CD8-positive, alpha-beta T cell (primary cell): ENCODE measurements at regions of chr1 and their contacts with region 1.

Region 1: DNA sequence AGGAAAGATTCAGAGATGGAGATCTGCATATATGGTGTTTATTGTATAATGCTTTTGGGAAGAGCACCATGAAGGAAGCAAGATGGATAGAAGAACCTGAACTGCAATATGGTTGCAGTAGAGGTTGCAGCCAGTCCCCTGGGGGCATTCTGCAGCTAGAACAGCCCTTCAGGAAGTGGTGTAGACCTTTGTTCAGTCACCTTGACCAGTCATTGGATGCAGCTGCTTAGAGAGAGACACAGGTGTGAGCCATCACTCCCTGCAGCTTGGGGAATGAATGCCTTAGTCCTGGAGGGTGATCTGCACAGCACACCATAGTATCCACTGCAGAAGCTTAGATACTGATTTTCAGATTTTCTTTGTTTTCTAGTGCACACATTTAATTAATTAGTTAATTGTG is 42.3 kb downstream of the NEK7 start:
- DNase-seq: no peak
- ATAC-seq: no peak
- H3K4me3 ChIP-seq: no peak overlapping the region
- H3K4me3 Mint-ChIP-seq: no peak overlapping the region
- H3K27ac ChIP-seq: no peak overlapping the region
- H3K27ac Mint-ChIP-seq: peak overlapping the region; percentile 1
- H3K4me1 ChIP-seq: peaks cover 34% of the 10 kb centered on the region
- H3K4me1 Mint-ChIP-seq: peaks cover 83% of the 10 kb centered on the region
- H3K27me3 ChIP-seq: no peaks in the 10 kb centered on the region
- H3K27me3 Mint-ChIP-seq: no peaks in the 10 kb centered on the region
- CTCF ChIP-seq: no peak

Region 2: GRCh38 chr1:198187973-198188588 is 11.0 kb before region 1 on chr1:
- CTCF ChIA-PET with region 1: interaction called, 4 read pairs
- POLR2A ChIA-PET with region 1: interaction called, 3 read pairs
- intact Hi-C with region 1: loop called in 1 of 2 experiments (anchors 2 kb)
- DNase-seq: peak in 6 of 9 experiments; percentile 27 to 79 (median 45)
- ATAC-seq: peak; percentile 87
- H3K4me3 ChIP-seq: no peak overlapping the region
- H3K4me3 Mint-ChIP-seq: peak overlapping the region; percentile 23
- H3K27ac ChIP-seq: peak overlapping the region in 1 of 2 experiments; percentile 78
- H3K27ac Mint-ChIP-seq: peak overlapping the region; percentile 81
- H3K4me1 ChIP-seq: peaks cover 64% of the 10 kb centered on the region
- H3K4me1 Mint-ChIP-seq: peaks cover 83% of the 10 kb centered on the region
- H3K27me3 ChIP-seq: no peaks in the 10 kb centered on the region
- H3K27me3 Mint-ChIP-seq: no peaks in the 10 kb centered on the region
- CTCF ChIP-seq: no peak

Region 3: DNA sequence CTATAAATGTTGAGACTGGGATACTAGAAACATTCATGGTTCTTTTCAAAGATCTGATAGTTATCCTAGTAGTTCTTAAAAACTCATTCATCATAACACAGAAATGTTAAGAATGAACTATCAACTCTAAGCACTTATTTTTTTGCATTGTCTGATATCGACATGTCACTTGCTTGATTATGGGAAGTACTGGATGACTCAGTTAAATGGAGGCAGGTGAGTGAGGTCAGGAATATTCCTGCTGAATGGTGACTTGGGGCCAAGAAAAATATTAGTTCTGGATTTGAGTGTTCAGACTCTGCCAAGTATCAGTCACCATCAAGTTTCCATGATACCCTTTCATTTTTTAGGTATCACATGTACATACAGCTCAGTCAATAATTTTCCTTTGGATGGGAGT is 21.3 kb after region 1 on chr1:
- CTCF ChIA-PET with region 1: no interaction called
- POLR2A ChIA-PET with region 1: interaction called, 4 read pairs
- intact Hi-C with region 1: loop called (anchors 2 kb)
- DNase-seq: no peak
- ATAC-seq: no peak
- H3K4me3 ChIP-seq: no peak overlapping the region
- H3K4me3 Mint-ChIP-seq: no peak overlapping the region
- H3K27ac ChIP-seq: no peak overlapping the region
- H3K27ac Mint-ChIP-seq: peak overlapping the region; percentile 62
- H3K4me1 ChIP-seq: no peaks in the 10 kb centered on the region
- H3K4me1 Mint-ChIP-seq: peaks cover 55% of the 10 kb centered on the region
- H3K27me3 ChIP-seq: no peaks in the 10 kb centered on the region
- H3K27me3 Mint-ChIP-seq: no peaks in the 10 kb centered on the region
- CTCF ChIP-seq: no peak

Region 4: DNA sequence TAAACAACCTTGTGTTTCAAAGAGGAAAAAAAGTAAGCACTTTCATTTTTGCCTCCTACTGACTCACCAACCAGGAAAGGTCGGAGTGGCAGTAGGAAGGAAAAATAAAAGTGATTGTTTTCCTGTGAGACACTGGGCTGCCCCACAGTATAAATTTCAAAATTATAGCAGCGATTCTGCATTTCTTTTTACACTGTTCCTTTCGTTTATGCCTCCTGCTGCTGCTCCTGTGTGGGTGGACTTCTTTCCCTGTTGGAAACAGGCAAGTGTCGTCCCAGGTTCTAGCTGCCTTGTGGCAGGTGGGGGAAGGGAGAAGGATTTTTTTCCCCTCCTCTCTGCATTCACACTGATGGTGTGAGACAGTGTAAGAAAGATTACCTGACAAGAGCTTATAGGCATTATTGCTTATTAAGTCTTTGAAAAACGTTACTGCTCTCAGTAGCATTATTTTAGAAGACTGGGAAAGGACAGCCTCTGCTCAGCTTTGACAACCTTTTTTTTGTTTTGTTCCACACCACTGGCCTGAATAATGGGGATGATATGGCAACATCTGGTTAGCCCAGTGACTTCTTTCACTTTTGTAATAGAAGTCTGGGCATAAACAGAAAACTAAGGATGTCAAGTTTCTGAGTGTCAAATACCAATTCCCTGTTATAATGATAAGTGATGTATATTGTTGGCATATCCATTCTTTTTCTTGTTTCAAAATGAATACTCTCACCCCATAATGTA is 35.6 kb after region 1 on chr1:
- CTCF ChIA-PET with region 1: no interaction called
- POLR2A ChIA-PET with region 1: no interaction called
- intact Hi-C with region 1: loop called in 1 of 2 experiments (anchors 5 kb)
- DNase-seq: peak in 2 of 9 experiments; percentile 17 to 36
- ATAC-seq: peak; percentile 38
- H3K4me3 ChIP-seq: no peak overlapping the region
- H3K4me3 Mint-ChIP-seq: no peak overlapping the region
- H3K27ac ChIP-seq: peak overlapping the region in 1 of 2 experiments; percentile 20
- H3K27ac Mint-ChIP-seq: no peak overlapping the region
- H3K4me1 ChIP-seq: peaks cover 12% of the 10 kb centered on the region
- H3K4me1 Mint-ChIP-seq: peaks cover 50% of the 10 kb centered on the region
- H3K27me3 ChIP-seq: no peaks in the 10 kb centered on the region
- H3K27me3 Mint-ChIP-seq: no peaks in the 10 kb centered on the region
- CTCF ChIP-seq: no peak

Region 5: DNA sequence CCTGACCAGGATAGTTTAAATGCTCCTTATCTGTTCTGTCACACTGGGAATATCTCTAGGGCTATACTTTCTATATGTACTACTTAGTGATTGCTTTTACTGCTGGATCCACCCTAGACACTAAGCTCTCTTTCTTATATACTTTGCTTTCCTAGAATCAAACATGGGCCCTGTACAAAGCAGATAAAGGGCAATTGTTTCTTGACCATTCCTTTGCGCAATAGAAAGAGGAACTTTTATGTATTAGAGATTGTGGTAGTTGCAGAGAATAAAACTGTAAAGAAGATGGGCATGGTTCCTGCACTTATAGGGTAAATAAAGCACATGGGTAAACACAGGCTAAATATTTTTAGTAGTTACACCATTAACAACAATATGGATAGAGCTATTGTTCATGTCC is 282.6 kb after region 1 on chr1:
- CTCF ChIA-PET with region 1: no interaction called
- POLR2A ChIA-PET with region 1: no interaction called
- intact Hi-C with region 1: no loop called
- DNase-seq: no peak
- ATAC-seq: no peak
- H3K4me3 ChIP-seq: no peak overlapping the region
- H3K4me3 Mint-ChIP-seq: no peak overlapping the region
- H3K27ac ChIP-seq: no peak overlapping the region
- H3K27ac Mint-ChIP-seq: no peak overlapping the region
- H3K4me1 ChIP-seq: no peaks in the 10 kb centered on the region
- H3K4me1 Mint-ChIP-seq: no peaks in the 10 kb centered on the region
- H3K27me3 ChIP-seq: no peaks in the 10 kb centered on the region
- H3K27me3 Mint-ChIP-seq: no peaks in the 10 kb centered on the region
- CTCF ChIP-seq: no peak

Region 6: DNA sequence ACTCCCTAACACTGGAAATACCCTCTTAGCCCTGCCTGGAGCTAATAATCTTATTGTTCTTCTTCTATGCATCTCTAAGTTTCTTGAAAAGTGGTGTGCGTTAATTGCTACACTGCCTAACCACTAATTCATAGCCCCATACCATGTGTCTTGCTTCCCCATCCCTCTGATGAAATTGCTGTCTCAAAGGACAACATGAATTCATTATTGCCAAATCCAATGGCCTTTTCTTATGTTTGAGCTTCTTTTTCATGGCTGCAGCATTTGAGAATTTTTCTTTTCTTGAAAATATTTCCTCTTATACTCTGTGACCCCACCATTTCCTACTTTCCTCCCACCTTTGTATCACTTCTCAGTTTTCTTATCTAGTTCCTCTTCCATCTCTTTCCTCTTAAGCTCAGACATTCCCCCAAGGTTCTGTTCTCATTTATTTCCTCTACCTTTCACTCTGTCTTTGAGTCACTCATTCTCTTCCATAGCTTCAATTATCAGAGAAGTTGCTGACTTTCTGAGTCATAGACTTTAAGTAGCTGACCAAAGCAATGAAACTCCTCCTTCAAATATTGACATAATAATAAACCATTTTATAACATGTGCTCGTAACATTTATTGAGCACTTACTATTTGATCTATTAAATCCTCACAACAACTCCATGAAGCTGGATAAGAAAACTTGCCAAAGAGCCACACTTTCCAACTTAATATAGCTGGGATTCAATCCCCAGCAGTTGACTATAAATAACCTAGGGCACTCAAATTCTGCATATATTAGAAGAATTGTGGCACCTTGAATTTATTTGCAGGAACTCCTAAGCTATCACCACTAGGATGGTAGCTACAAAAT is 376.9 kb after region 1 on chr1:
- CTCF ChIA-PET with region 1: no interaction called
- POLR2A ChIA-PET with region 1: no interaction called
- intact Hi-C with region 1: no loop called
- DNase-seq: no peak
- ATAC-seq: no peak
- H3K4me3 ChIP-seq: no peak overlapping the region
- H3K4me3 Mint-ChIP-seq: no peak overlapping the region
- H3K27ac ChIP-seq: no peak overlapping the region
- H3K27ac Mint-ChIP-seq: no peak overlapping the region
- H3K4me1 ChIP-seq: no peaks in the 10 kb centered on the region
- H3K4me1 Mint-ChIP-seq: peaks cover 25% of the 10 kb centered on the region
- H3K27me3 ChIP-seq: no peaks in the 10 kb centered on the region
- H3K27me3 Mint-ChIP-seq: no peaks in the 10 kb centered on the region
- CTCF ChIP-seq: no peak